Activated CD4-positive, alpha-beta memory T cell treated with anti-CD3 and anti-CD28 coated beads for 36 hours (primary cell): ENCODE measurements at regions of chr1 and their contacts with region 1.

Region 1: GRCh38 chr1:179809506-179810366 is 66.6 kb downstream of the FAM163A start:
- DNase-seq: peak; percentile 75
- H3K4me3 Mint-ChIP-seq: no peak overlapping the region
- H3K27ac Mint-ChIP-seq: no peak overlapping the region
- H3K4me1 Mint-ChIP-seq: peaks cover 10% of the 10 kb centered on the region
- H3K27me3 Mint-ChIP-seq: no peaks in the 10 kb centered on the region

Region 2: DNA sequence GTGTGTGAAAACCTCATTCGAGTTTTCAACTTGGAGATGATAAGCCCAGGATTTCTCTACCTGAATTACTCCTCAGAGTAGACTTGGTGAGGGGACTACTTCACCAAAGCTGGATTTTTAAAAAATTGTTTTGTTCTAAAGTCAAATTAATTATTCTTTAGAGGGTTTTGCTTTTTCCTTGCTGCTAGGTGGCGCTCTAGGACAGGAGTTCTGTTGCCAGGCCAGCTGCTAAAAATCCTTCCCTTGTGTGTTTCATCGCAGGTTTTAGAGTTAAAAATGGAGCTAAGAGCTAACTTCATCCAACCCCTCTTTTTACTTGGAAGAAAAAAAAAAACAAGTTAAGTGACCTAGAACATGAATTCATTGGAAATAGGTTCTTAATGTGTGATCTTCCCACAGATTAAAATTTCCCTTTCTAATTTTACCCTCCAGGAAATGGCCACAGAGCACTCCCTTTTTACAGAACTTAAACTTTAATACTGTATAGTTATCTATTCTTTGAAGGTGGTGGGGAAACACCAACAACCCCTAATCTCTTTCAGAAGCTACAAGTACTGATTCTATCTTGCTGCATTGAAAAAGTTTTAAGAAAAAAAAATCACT is 103.3 kb before region 1 on chr1:
- CTCF ChIA-PET with region 1: interaction called, 774 read pairs
- POLR2A ChIA-PET with region 1: interaction called, 6 read pairs
- intact Hi-C with region 1: loop called (anchors 1 kb)
- DNase-seq: peak; percentile 73
- H3K4me3 Mint-ChIP-seq: no peak overlapping the region
- H3K27ac Mint-ChIP-seq: no peak overlapping the region
- H3K4me1 Mint-ChIP-seq: peaks cover 19% of the 10 kb centered on the region
- H3K27me3 Mint-ChIP-seq: no peaks in the 10 kb centered on the region

Region 3: GRCh38 chr1:179742717-179743678 is 66.7 kb before region 1 on chr1 and contains the start of gene FAM163A:
- CTCF ChIA-PET with region 1: interaction called, 11 read pairs
- POLR2A ChIA-PET with region 1: no interaction called
- intact Hi-C with region 1: no loop called
- DNase-seq: peak; percentile 17
- H3K4me3 Mint-ChIP-seq: peak within 1 kb of the TSS; percentile 17
- H3K27ac Mint-ChIP-seq: no peak within 1 kb of the TSS
- H3K4me1 Mint-ChIP-seq: peaks cover 9% of the 10 kb centered on the region
- H3K27me3 Mint-ChIP-seq: peaks cover 49% of the 10 kb centered on the region
- total RNA-seq, gene FAM163A: not detected

Region 4: GRCh38 chr1:179824265-179824664 is 14.5 kb after region 1 on chr1:
- CTCF ChIA-PET with region 1: interaction called, 68 read pairs
- POLR2A ChIA-PET with region 1: no interaction called
- intact Hi-C with region 1: no loop called
- DNase-seq: no peak
- H3K4me3 Mint-ChIP-seq: no peak overlapping the region
- H3K27ac Mint-ChIP-seq: no peak overlapping the region
- H3K4me1 Mint-ChIP-seq: no peaks in the 10 kb centered on the region
- H3K27me3 Mint-ChIP-seq: no peaks in the 10 kb centered on the region

Region 5: DNA sequence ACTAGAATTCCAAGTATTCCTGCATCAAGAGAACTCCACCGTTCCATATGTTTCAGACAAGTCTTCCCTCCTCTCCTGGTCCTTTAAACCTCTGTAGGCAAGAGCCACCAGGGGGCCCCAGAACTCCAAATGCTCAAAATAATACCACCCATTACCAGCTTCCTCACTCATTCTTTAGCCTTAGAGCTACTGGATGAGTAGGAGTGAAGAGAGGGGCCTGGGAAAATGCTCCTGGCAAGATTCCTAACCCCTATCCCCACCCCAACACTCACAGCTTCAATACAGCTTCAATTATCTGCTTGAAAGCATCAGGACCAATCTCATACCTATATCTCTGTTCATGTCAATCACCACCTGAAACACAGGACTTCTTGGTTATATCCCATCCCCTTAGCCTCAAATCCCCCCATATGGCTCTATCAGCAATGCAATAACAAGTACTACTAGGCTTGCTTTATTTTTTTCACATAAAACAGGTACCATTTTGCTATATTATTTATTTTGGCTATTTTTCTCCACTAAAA is 58.1 kb after region 1 on chr1:
- CTCF ChIA-PET with region 1: interaction called, 11 read pairs
- POLR2A ChIA-PET with region 1: no interaction called
- intact Hi-C with region 1: no loop called
- DNase-seq: peak; percentile 63
- H3K4me3 Mint-ChIP-seq: no peak overlapping the region
- H3K27ac Mint-ChIP-seq: no peak overlapping the region
- H3K4me1 Mint-ChIP-seq: peaks cover 18% of the 10 kb centered on the region
- H3K27me3 Mint-ChIP-seq: no peaks in the 10 kb centered on the region

Region 6: DNA sequence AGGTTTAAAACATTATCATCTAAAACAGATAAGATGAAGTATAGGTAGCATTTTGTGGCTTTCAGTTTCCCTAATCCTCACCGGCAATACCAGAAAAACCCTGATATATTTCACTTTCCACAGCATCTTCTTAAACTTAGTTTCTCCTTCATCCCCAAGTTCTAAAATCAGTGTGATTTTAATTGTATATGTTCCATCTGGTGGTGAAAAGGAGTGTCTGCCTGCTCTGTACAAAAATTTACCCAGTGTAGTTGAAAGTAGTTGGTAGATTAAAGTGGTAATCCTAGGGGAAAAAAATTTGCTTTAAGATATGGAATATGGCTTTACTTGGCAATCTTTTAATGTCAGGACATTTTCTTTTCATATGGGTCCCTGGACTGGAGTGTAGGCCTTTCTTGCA is 219.1 kb after region 1 on chr1:
- CTCF ChIA-PET with region 1: no interaction called
- POLR2A ChIA-PET with region 1: no interaction called
- intact Hi-C with region 1: no loop called
- DNase-seq: no peak
- H3K4me3 Mint-ChIP-seq: no peak overlapping the region
- H3K27ac Mint-ChIP-seq: no peak overlapping the region
- H3K4me1 Mint-ChIP-seq: peaks cover 10% of the 10 kb centered on the region
- H3K27me3 Mint-ChIP-seq: no peaks in the 10 kb centered on the region

Region 7: DNA sequence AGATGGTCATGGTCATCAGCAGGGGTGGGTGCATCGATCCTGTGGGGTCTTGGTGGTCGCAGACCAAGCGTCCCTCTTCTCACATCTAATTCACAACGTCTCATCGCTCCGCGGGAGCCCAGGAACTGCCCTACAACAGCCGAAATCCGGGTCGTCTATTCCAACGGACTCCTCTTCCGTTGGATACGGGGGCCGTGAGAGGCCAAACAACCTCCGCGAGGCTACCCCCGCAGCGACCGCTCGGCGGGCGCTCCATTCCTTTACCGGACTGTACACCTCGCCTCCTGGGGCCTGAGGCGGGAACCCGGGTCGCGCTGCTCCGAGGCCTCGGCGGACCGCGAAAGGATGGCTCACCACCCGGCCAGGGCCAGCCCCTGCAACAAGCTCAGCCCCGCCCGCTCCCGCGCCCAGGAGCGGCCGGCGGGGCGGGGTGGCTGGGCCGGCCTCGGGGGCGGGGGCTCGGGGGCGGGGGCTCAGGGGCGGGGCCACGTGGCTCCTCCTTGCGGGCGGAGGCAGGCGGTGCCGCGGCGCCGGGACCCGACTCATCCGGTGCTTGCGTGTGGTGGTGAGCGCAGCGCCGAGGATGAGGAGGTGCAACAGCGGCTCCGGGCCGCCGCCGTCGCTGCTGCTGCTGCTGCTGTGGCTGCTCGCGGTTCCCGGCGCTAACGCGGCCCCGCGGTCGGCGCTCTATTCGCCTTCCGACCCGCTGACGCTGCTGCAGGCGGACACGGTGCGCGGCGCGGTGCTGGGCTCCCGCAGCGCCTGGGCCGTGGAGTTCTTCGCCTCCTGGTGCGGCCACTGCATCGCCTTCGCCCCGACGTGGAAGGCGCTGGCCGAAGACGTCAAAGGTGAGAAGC is 344.8 kb after region 1 on chr1 and contains the start of gene QSOX1:
- CTCF ChIA-PET with region 1: interaction called, 3 read pairs
- POLR2A ChIA-PET with region 1: no interaction called
- intact Hi-C with region 1: loop called (anchors 10 kb)
- DNase-seq: peak; percentile 93
- H3K4me3 Mint-ChIP-seq: peak within 1 kb of the TSS; percentile 89
- H3K27ac Mint-ChIP-seq: peak within 1 kb of the TSS; percentile 73
- H3K4me1 Mint-ChIP-seq: peaks cover 26% of the 10 kb centered on the region
- H3K27me3 Mint-ChIP-seq: no peaks in the 10 kb centered on the region
- total RNA-seq, gene QSOX1: 40.3 to 42.4 TPM